ENCODE measurements at regions of chr4 and their contacts with region 1.

Region 1: DNA sequence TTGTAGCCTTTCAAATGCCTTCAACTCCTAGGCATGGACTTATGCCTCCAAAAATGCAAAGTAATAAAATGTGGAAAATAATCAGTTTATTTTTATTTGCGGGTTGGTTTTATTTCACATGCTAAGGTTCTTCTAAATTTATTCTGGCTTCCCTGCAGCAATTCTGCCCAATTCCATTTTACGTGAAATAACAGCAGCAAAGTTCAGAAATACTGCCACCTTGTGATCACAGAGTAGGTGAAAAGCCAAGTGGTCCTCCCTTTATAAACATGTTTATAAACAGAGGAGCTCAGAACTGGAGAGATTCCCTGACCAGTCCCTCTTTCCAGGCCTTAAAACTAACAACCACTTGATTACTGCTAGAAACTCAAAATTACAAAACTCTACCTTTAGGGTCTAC is 14.7 kb upstream of the DCHS2 start:
- DNase-seq: no peak
- H3K4me3 ChIP-seq: no peak overlapping the region
- H3K27ac ChIP-seq: peak overlapping the region; percentile 78 to 94 (median 86)
- H3K4me1 ChIP-seq: peaks cover 6 to 21% of the 10 kb centered on the region in 2 donors
- H3K27me3 ChIP-seq: no peaks in the 10 kb centered on the region
- CTCF ChIP-seq: peak in 3 of 6 experiments; percentile 55 to 67 (median 66)
- POLR2A ChIP-seq: no peak

Region 2: GRCh38 chr4:154551872-154552686 is 45.8 kb after region 1 on chr4:
- intact Hi-C with region 1: loop called (anchors 10 kb)
- DNase-seq: peak; percentile 73 to 76
- H3K4me3 ChIP-seq: no peak overlapping the region
- H3K27ac ChIP-seq: no peak overlapping the region
- H3K4me1 ChIP-seq: peaks cover 10 to 15% of the 10 kb centered on the region in 2 donors
- H3K27me3 ChIP-seq: no peaks in the 10 kb centered on the region
- CTCF ChIP-seq: peak; percentile 37 to 89 (median 70)
- POLR2A ChIP-seq: no peak

Measured in thyroid gland (tissue), 4 donors.